Heart right ventricle (tissue), 16 donors: ENCODE measurements at regions of chr2 and their contacts with region 1.

Region 1: DNA sequence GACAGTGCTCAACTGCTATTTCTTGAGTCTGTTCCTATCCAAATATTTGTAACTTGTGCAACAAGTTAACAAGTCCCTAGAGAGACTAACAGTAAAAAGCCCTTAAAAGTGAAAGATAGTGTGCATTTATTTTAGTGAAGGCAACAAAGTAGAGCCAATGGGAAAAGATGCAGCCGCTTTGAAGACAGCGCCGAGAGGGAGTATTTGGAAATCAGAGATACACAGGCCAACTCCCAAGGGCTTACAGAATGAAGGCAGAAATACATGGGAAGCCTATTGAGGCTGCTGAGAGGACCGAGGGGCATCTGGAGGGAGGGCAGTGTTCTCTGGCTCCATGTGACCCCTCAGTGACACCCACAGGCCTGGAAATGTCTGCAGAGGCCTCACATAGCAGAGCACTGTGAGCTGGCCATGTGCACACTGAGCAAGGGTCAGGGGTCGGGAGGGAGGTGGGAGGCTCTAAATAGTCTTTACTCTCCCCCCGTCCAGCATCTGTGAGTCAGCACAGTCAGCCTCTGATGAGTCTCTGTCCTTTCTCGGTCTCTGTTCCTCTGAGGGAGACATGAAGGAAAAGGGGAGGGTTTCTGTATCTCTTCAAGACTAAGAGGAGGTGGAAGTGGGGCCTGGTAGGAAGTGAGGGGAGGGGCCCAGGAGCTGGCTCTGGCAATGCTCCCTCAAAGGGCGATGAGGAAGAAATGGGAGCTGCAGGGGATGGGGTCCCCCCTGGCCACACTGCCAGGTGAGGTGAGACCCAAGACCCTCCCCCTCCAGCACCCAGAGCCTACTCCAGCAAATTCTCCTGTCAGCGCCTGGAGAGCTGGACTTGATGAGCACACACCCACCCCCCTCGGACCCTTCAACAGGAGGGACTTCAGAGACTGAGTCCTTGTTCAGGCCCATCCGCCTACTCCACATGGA is 133.6 kb downstream of the SP3 start:
- DNase-seq: peak; percentile 73 to 84
- ATAC-seq: peak; percentile 89 to 95 (median 91)
- H3K4me3 ChIP-seq: no peak overlapping the region
- H3K27ac ChIP-seq: peak overlapping the region in 6 of 10 donors; percentile 30 to 61 (median 53)
- H3K4me1 ChIP-seq: peaks cover 0 to 27% (median 21%) of the 10 kb centered on the region in 9 donors
- H3K27me3 ChIP-seq: peaks cover 0 to 11% (median 0%) of the 10 kb centered on the region in 7 donors
- CTCF ChIP-seq: no peak

Region 2: GRCh38 chr2:173631127-173631460 is 200.5 kb before region 1 on chr2:
- intact Hi-C with region 1: loop called in 1 of 10 experiments (anchors 5 kb)
- DNase-seq: peak in 1 of 2 donors; percentile 44
- ATAC-seq: peak in 7 of 8 donors; percentile 68 to 92 (median 79)
- H3K4me3 ChIP-seq: peak overlapping the region in 3 of 10 donors; percentile 1 to 11 (median 8)
- H3K27ac ChIP-seq: peak overlapping the region in 9 of 10 donors; percentile 27 to 68 (median 50)
- H3K4me1 ChIP-seq: no peaks in the 10 kb centered on the region
- H3K27me3 ChIP-seq: peaks cover 0 to 3% (median 0%) of the 10 kb centered on the region in 7 donors
- CTCF ChIP-seq: no peak

Region 3: DNA sequence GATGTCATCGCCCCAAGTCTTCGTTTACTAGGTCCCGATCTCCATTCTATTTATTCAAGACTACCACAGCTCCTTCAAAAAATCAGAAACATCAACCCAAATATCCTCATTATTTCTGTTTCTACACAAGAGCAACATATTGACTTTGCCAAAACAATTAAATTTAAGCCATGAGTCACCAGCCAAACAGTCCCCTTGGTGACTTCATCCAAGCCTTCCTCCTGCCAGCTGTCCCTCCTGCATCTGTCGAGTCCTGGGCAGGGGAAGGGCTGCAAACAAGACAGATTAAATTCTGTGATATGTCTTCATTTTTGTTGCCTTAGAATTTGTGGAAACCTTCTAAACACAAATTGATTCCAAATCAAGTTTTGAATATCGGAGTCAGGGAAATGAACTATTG is 23.3 kb after region 1 on chr2:
- intact Hi-C with region 1: loop called in 1 of 10 experiments (anchors 2 kb)
- DNase-seq: peak in 1 of 2 donors; percentile 35
- ATAC-seq: peak in 6 of 8 donors; percentile 61 to 84 (median 68)
- H3K4me3 ChIP-seq: no peak overlapping the region
- H3K27ac ChIP-seq: no peak overlapping the region
- H3K4me1 ChIP-seq: peaks cover 0 to 30% (median 11%) of the 10 kb centered on the region in 9 donors
- H3K27me3 ChIP-seq: peaks cover 0 to 5% (median 0%) of the 10 kb centered on the region in 7 donors
- CTCF ChIP-seq: no peak